Adrenal gland (tissue), 19 donors: ENCODE measurements at regions of chr7 and their contacts with region 1.

Region 1: DNA sequence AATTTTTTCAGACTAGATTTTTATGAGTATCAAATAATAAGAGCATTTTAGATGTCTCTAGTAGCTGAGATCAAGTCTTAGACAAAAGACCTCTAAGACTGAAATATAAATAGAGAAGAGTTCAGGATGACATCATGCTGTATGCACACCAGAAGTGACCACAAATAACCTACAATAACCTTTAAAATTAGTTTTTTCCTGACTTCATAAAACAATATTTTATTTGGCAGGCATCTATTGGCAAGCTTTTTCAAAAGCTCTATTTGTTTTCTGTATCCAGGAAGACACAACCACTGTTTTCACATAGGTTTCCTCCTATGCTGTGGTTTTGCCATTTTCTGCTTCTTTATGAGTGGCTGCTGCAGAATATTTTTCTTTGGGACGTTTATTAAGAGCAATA is 359.1 kb downstream of the CRPPA start:
- DNase-seq: no peak
- H3K4me3 ChIP-seq: no peak overlapping the region
- H3K27ac ChIP-seq: no peak overlapping the region
- H3K4me1 ChIP-seq: peaks cover 0 to 11% of the 10 kb centered on the region in 2 donors
- H3K27me3 ChIP-seq: no peaks in the 10 kb centered on the region
- CTCF ChIP-seq: no peak
- POLR2A ChIP-seq: no peak

Region 2: DNA sequence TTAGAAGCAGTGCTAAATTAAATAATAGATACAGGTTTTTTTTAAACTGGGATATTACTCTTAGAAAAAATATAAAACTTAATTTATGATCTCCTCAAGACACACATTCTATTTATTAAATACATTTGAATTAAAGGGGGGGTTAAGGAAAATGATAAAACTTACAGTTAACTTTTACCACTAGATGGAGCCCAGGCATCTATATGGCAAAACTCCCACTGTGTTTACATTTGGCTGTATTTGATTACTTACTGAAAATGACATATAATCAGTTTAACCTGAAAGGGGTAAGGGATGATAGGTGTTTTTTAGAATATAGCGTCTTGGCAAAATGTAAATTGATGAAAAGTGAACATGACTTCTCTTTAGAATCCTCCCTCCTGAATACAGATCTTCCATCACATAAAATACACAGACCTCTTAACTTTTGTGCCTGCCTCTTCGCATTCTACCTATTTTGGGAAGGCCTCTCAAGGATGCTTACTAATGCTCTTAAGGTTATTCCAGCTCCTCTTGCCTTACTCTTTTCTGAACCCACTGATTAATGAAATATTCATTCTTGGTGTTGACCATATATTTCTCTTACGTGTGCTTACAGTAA is 736.1 kb before region 1 on chr7:
- intact Hi-C with region 1: loop called in 1 of 2 experiments (anchors 10 kb)
- DNase-seq: no peak
- H3K4me3 ChIP-seq: no peak overlapping the region
- H3K27ac ChIP-seq: no peak overlapping the region
- H3K4me1 ChIP-seq: no peaks in the 10 kb centered on the region
- H3K27me3 ChIP-seq: no peaks in the 10 kb centered on the region
- CTCF ChIP-seq: peak in 4 of 6 experiments; percentile 16 to 37 (median 27)
- POLR2A ChIP-seq: no peak